ENCODE measurements at regions of chr9 and their contacts with region 1.

Region 1: DNA sequence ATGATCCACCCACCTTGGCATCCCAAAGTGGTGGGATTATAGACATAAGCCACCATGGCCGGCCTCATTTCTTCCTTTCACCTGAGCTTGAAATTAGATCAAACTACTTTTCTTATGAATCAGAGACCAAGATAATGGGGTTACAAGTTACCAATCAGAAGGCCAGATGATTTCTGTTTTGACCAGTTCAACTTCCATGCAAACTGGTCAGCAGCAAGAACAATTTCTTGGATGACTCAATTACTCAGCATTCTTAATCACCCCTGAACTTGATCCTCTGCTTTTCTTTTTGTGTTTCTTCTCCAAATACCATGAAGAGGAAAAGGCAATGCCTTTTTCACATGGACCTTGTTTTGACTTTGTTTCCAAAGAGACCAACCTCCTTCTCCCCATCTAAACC is 10.0 kb upstream of the PLIN2 start:
- DNase-seq: no peak
- H3K4me3 ChIP-seq: no peak overlapping the region
- H3K27ac ChIP-seq: no peak overlapping the region
- H3K4me1 ChIP-seq: no peaks in the 10 kb centered on the region
- H3K27me3 ChIP-seq: no peaks in the 10 kb centered on the region
- CTCF ChIP-seq: no peak
- POLR2A ChIP-seq: no peak

Region 2: GRCh38 chr9:19213823-19214222 is 76.5 kb after region 1 on chr9:
- CTCF ChIA-PET with region 1: no interaction called
- POLR2A ChIA-PET with region 1: no interaction called
- dilution Hi-C with region 1: no loop called
- intact Hi-C with region 1: loop called (anchors 2 kb)
- DNase-seq: no peak
- H3K4me3 ChIP-seq: no peak overlapping the region
- H3K27ac ChIP-seq: no peak overlapping the region
- H3K4me1 ChIP-seq: no peaks in the 10 kb centered on the region
- H3K27me3 ChIP-seq: no peaks in the 10 kb centered on the region
- CTCF ChIP-seq: no peak
- POLR2A ChIP-seq: no peak

Region 3: DNA sequence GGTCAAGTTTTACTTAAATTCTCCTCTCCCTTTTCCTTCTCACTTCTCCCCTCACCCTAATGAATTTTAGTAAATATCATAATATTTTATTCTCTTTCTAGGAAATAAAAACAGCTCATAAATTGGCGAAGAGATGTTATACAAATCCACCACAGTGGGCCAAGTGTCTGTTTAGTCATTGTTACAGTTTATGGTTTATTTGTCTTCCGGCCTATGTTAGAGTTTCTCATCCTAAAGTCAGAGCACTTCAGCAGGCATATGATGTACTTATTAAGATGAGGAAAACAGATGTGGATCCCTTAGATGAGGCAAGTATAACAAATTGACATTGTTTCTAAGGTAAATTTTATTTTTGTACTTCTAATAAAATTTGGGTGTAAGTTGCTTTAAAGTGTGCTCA is 194.6 kb after region 1 on chr9:
- CTCF ChIA-PET with region 1: no interaction called
- POLR2A ChIA-PET with region 1: no interaction called
- dilution Hi-C with region 1: no loop called
- intact Hi-C with region 1: no loop called
- DNase-seq: no peak
- H3K4me3 ChIP-seq: no peak overlapping the region
- H3K27ac ChIP-seq: no peak overlapping the region
- H3K4me1 ChIP-seq: no peaks in the 10 kb centered on the region
- H3K27me3 ChIP-seq: no peaks in the 10 kb centered on the region
- CTCF ChIP-seq: no peak
- POLR2A ChIP-seq: no peak

Measured in endothelial cell of umbilical vein (primary cell).